ENCODE measurements at regions of chr2 and their contacts with region 1.

Region 1: GRCh38 chr2:120546048-120546864 is 189.4 kb upstream of the GLI2 start:
- DNase-seq: no peak
- H3K4me3 ChIP-seq: no peak overlapping the region
- H3K27ac ChIP-seq: no peak overlapping the region
- H3K4me1 ChIP-seq: peaks cover 33% of the 10 kb centered on the region
- H3K27me3 ChIP-seq: no peaks in the 10 kb centered on the region
- CTCF ChIP-seq: no peak

Region 2: DNA sequence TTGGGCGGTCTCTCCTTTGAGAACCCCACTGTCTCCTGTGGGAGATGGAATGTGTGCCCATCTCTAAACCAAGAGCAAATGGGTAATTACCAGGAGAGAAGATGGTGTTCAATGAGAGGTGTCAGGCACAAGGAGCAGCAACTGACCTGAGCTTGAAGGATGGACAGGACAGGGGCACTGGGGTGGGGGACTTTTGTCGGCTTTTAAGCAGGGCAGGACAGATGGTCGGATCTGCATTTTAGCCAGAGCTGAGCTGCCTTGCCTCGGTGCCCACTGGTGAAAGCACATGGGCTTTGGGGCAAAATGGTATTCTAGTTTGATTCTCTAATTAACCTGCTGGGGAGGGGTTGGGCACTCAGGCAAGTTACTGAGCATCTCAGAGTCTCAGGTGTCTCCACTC is 102.3 kb before region 1 on chr2:
- CTCF ChIA-PET with region 1: no interaction called
- POLR2A ChIA-PET with region 1: interaction called, 11 read pairs
- intact Hi-C with region 1: no loop called
- DNase-seq: no peak
- H3K4me3 ChIP-seq: no peak overlapping the region
- H3K27ac ChIP-seq: no peak overlapping the region
- H3K4me1 ChIP-seq: peaks cover 22% of the 10 kb centered on the region
- H3K27me3 ChIP-seq: no peaks in the 10 kb centered on the region
- CTCF ChIP-seq: no peak

Region 3: DNA sequence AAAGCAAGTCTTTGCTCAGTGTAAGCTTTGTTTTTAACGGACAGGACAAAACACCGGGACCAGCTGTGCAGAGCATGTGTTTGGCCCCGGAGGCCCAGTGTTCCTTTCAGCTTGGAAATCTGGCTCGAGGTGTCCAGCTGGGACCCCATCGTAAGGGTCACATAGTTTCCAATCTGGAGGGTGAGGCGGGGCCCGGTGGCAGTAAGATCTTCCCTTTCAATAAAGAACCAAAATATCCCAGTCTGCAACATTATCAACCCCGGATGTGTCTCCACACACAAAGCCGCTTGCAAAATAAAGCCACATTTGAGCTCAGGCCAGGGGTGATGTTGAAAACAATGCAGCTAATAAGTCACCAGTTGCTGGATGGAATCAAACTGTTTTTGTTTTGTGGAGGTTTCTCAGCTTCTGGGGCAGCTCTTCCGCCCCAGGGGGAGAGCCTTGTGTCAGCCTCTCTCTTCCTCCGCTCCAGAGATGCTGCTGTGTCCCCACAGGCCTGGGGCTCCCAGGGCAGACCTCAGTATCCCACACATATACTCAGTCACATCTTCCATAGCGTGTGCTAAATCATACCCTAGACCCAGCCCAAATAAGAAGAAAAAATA is 50.8 kb after region 1 on chr2:
- CTCF ChIA-PET with region 1: no interaction called
- POLR2A ChIA-PET with region 1: no interaction called
- intact Hi-C with region 1: no loop called
- DNase-seq: no peak
- H3K4me3 ChIP-seq: no peak overlapping the region
- H3K27ac ChIP-seq: no peak overlapping the region
- H3K4me1 ChIP-seq: 0 out of 2 replicates have a peak, but pooled peaks cover 3% of the 10 kb centered on the region
- H3K27me3 ChIP-seq: no peaks in the 10 kb centered on the region
- CTCF ChIP-seq: no peak

Measured in PC-9 (cell line).